Naive thymus-derived CD4-positive, alpha-beta T cell (primary cell): ENCODE measurements at regions of chr11 and their contacts with region 1.

Region 1: DNA sequence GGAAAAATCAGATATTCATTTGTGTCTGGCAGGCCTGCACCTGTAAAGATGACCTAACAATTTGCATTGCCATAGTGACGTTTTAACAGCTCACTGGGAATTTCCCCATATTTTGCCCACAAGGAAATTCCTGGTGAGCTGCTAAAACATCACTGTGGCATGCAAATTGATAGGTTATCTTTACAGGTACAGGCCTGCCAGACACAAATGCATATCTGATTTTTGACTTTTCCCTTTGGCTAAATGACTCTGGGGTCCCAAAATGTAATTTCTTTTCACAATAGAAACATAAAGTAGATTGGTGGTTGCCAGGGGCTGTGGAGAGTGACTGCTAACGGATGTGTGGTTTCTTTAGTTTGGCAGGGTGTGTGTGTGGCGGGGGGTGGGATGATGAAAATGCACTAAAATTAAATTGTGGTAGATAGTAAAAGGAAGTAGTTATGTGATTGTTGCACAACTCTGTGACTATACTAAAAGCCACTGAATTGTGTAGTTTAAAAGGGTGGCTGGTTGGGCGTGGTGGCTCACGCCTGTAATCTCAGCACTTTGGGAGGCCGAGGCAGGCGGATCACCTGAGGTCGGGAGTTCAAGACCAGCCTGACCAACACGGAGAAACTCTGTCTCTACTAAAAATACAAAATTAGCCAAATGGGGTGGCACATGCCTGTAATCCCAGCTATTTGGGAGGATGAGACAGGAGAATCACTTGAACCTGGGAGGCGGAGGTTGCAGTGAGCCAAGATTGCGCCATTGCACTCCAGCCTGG is 18.5 kb upstream of the FEZ1 start:
- DNase-seq: peak; percentile 16 to 72 (median 53)
- ATAC-seq: peak; percentile 87
- H3K4me3 ChIP-seq: no peak overlapping the region
- H3K4me3 Mint-ChIP-seq: peak overlapping the region; percentile 12 to 72 (median 44)
- H3K27ac ChIP-seq: peak overlapping the region; percentile 56
- H3K27ac Mint-ChIP-seq: peak overlapping the region; percentile 58 to 94 (median 85)
- H3K4me1 ChIP-seq: peaks cover 17 to 24% of the 10 kb centered on the region in 2 donors
- H3K4me1 Mint-ChIP-seq: peaks cover 30 to 47% (median 38%) of the 10 kb centered on the region in 7 donors
- H3K27me3 ChIP-seq: no peaks in the 10 kb centered on the region
- H3K27me3 Mint-ChIP-seq: no peaks in the 10 kb centered on the region

Region 2: DNA sequence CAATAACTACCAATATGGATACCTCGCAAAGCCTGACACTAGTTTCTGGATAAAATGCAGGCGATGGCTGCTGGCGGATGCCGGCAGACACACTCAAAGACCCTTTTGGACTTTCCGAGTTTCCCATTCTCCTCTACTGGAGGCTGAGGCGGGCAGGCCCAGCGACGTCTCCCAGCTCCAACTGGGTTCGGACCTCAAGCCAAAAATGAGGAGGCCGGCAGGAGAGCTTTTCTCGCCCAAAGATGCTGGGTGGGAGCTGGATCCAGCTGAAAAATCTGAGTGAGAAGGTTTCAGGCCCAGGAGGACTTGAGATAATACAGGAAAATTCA is 18.0 kb before region 1 on chr11:
- CTCF ChIA-PET with region 1: no interaction called
- POLR2A ChIA-PET with region 1: no interaction called
- intact Hi-C with region 1: loop called in 1 of 2 experiments (anchors 2 kb)
- DNase-seq: no peak
- ATAC-seq: no peak
- H3K4me3 ChIP-seq: peak overlapping the region; percentile 32
- H3K4me3 Mint-ChIP-seq: peak overlapping the region; percentile 71 to 97 (median 89)
- H3K27ac ChIP-seq: no peak overlapping the region
- H3K27ac Mint-ChIP-seq: peak overlapping the region in 2 of 9 donors; percentile 18 to 29
- H3K4me1 ChIP-seq: peaks cover 0 to 17% of the 10 kb centered on the region in 2 donors
- H3K4me1 Mint-ChIP-seq: peaks cover 14 to 30% (median 24%) of the 10 kb centered on the region in 7 donors
- H3K27me3 ChIP-seq: peaks cover 6 to 15% of the 10 kb centered on the region in 2 donors
- H3K27me3 Mint-ChIP-seq: peaks cover 44 to 60% (median 49%) of the 10 kb centered on the region in 5 donors

Region 3: DNA sequence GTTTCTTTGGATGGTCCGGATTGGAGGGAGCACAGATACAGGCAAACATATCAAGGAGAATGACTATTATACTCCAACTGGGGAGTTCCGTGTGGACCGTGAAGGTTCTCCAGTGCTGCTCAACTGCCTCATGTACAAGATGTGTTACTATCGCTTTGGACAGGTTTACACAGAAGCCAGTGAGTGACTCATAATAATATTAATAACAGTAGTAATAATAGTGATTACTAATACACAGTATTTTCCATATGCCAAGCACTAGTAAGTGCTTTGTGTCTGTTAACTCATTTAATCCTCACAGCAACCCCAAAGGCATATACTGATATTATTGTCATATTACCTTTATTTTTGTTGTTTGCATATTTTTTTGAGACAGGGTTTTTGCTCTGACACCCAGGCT is 103.9 kb after region 1 on chr11:
- CTCF ChIA-PET with region 1: no interaction called
- POLR2A ChIA-PET with region 1: no interaction called
- intact Hi-C with region 1: no loop called
- DNase-seq: no peak
- ATAC-seq: no peak
- H3K4me3 ChIP-seq: no peak overlapping the region
- H3K4me3 Mint-ChIP-seq: no peak overlapping the region
- H3K27ac ChIP-seq: no peak overlapping the region
- H3K27ac Mint-ChIP-seq: no peak overlapping the region
- H3K4me1 ChIP-seq: no peaks in the 10 kb centered on the region
- H3K4me1 Mint-ChIP-seq: peaks cover 0 to 2% (median 0%) of the 10 kb centered on the region in 7 donors
- H3K27me3 ChIP-seq: no peaks in the 10 kb centered on the region
- H3K27me3 Mint-ChIP-seq: no peaks in the 10 kb centered on the region